Astrocyte of the cerebellum (primary cell): ENCODE measurements at regions of chr1 and their contacts with region 1.

Region 1: DNA sequence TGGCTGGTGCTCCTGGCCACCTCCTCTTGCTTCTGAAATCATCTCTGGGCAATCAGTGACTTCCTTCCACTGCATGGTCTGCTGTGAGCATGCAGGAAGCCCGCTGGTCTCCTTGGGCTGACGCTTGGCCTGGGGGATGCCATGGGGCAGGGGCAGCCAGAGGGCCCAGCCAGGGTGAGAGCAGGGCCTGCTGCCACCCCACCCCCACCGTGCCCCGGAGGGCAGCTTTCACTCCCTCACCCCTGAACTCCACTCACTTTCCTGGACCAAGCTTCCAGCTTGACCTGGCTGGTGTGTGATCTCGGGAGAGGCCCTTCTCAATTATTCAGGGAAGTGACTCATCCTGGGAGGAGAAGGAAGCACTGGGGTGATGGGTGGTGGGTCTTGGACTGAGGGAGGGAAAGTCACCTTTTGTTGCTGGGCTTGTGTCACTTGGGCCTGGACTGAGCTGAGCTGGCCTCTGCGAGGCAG is 270.2 kb upstream of the CSF3R start:
- DNase-seq: no peak
- H3K4me3 ChIP-seq: no peak overlapping the region
- CTCF ChIP-seq: no peak

Region 2: DNA sequence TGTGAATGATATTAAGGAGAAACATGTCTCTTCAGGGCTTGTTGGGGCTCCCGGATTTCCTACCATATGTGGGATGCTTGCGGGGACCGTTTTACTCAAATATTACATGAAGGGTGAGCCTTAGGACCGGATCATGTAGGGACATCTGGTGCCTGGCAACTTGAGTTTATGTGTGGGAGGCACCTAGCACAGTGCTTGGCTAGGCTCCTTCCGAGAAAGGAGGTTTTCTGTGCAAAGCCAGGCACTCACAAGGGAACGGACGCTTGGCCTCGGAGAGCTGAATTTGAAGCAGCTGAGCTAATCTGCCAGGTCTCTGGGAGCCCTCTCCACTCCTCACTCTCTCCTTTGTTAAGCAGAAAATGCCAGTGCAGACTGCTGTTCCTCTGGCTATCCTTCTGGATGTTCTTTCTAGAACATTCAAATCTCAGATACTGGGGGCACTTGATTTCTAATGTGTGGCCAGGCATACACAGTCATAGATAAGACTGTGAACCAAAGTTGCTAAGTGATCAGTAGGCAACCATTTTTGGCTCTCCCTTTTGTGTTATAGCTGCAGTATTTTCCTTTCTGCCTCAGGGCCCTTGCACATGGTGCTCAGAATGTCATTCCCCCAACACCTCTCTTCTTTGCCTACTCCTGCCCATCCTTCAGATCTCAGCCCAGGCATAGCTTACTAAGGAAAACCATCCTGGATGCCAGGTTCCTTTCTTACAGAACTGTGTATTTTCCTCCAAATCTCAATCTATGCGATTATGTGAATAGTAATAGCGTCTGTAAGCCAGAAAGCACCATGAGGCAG is 53.6 kb before region 1 on chr1:
- in situ Hi-C with region 1: loop called (anchors 5 kb)
- DNase-seq: no peak
- H3K4me3 ChIP-seq: no peak overlapping the region
- CTCF ChIP-seq: no peak

Region 3: GRCh38 chr1:37001703-37002102 is 248.8 kb after region 1 on chr1:
- in situ Hi-C with region 1: no loop called
- DNase-seq: no peak
- H3K4me3 ChIP-seq: no peak overlapping the region
- CTCF ChIP-seq: no peak